Vagina (tissue), 2 donors: ENCODE measurements at regions of chr1 and their contacts with region 1.

Region 1: DNA sequence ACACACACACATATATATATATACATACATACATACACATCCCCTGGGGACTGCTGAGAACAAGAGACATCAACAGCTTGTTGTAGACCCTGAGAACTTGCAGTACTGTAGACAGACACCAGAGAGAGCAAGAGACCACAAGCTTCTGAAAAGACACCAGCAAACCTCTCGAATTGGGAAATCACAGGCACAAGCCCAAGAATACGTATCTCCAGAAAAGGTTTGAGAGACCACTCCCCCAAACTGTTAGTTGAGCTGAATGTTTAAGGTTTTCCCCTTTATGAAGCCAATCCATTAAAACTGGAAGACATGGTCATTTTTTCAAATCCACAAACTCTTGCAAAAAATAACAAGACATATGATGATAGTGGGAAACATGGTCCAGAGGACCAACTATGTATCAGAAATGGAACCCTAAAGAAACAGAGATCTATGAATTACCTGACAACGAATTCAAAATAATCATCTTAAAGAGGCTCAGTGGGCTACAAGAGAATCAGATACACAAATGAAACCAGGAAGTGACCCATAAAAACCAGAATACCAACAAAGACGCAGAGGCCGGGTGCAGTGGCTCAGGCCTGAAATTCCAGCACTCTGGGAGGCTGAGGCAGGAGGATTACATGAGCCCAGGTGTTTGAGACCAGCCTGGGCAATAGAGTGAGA is 45.1 kb downstream of the SLC2A1 start:
- DNase-seq: no peak
- H3K4me3 ChIP-seq: no peak overlapping the region
- H3K27ac ChIP-seq: no peak overlapping the region
- H3K4me1 ChIP-seq: no peaks in the 10 kb centered on the region
- H3K27me3 ChIP-seq: no peaks in the 10 kb centered on the region
- CTCF ChIP-seq: peak; percentile 68 to 95 (median 70)
- POLR2A ChIP-seq: no peak

Region 2: GRCh38 chr1:43073490-43074230 is 160.1 kb after region 1 on chr1:
- intact Hi-C with region 1: loop called (anchors 2 kb)
- DNase-seq: no peak
- H3K4me3 ChIP-seq: no peak overlapping the region
- H3K27ac ChIP-seq: no peak overlapping the region
- H3K4me1 ChIP-seq: peaks cover 16% of the 10 kb centered on the region
- H3K27me3 ChIP-seq: no peaks in the 10 kb centered on the region
- CTCF ChIP-seq: peak; percentile 88 to 95 (median 92)
- POLR2A ChIP-seq: no peak

Region 3: DNA sequence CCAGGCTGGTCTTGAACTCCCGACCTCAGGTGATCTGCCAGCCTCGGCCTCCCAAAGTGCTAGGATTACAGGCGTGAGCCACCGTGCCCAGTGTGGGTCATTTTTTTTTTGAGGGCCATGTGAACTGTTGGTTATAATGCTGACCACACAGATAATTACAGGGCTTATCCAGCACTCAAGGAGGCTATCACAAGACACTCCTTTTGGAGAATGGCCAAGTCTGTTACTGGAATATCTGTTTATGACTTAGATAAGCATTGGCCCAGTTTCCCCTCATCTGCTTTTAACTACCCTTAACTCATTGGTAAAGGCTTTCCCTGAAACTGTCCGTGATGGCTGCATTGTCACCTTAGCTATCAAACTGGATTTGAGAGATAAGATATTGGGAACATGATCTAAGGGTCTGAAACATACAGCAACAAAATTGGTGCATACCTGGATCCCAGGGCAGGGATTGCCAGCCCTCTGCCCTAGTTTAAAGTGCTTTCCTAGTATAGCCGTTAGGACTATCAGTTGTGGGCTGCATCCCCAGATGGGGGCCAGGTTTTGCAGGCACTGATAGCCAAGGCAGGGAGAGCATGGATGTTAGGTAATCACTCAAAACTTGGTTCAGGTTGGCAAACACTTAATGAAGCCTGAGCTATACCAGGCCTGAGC is 491.8 kb after region 1 on chr1:
- intact Hi-C with region 1: no loop called
- DNase-seq: no peak
- H3K4me3 ChIP-seq: no peak overlapping the region
- H3K27ac ChIP-seq: no peak overlapping the region
- H3K4me1 ChIP-seq: no peaks in the 10 kb centered on the region
- H3K27me3 ChIP-seq: no peaks in the 10 kb centered on the region
- CTCF ChIP-seq: no peak
- POLR2A ChIP-seq: no peak